ENCODE measurements at regions of chr19 and their contacts with region 1.

Region 1: GRCh38 chr19:16355293-16356043 is 30.8 kb downstream of the KLF2 start:
- DNase-seq: no peak
- H3K4me3 Mint-ChIP-seq: no peak overlapping the region
- H3K27ac Mint-ChIP-seq: peak overlapping the region; percentile 69
- H3K4me1 Mint-ChIP-seq: peaks cover 80% of the 10 kb centered on the region
- H3K27me3 Mint-ChIP-seq: no peaks in the 10 kb centered on the region

Region 2: DNA sequence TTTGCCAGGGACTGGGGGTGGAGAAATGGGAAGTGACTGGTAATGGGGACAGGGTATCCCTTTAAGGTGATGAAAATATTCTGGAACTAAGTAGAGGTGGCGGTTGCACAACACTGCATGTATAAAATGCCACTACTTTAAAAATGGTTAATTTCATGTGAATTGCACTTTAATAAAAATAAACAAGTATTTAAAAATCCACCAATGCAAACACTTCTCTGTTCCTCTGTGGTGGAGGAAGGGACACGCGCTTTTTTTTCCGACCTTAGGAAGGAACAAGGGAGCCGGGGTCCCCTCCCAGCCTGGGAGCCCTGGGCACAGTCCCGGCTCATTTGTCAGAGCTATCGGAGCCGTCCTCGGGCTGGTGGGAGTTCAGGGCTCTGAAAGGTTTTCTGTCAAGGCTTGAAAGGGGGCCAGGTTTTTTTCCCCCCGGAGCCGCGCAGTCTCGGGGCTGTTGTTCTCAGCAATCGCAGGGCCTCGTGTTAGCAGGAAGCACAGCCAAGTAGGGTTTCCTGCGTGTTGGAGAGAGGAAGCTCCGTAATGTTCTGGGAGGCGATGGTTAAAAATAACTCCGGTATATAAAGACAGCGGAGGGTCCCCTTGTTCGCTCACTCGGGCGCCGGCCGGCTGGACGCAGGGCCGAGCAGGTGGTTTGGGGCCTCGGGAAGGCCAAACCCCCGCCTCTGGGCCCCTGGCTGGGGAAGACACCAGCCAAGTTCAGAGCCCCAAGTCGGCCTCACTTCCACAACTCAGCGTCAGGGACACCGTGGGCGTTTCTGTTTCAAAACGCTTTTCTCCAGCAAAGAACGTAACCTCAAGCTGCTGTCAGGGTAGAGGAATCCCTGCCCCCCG is 72.0 kb before region 1 on chr19:
- CTCF ChIA-PET with region 1: no interaction called
- POLR2A ChIA-PET with region 1: no interaction called
- DNase-seq: peak; percentile 53
- H3K4me3 Mint-ChIP-seq: peak overlapping the region; percentile 21
- H3K27ac Mint-ChIP-seq: peak overlapping the region; percentile 40
- H3K4me1 Mint-ChIP-seq: peaks cover 32% of the 10 kb centered on the region
- H3K27me3 Mint-ChIP-seq: peaks cover 23% of the 10 kb centered on the region

Region 3: GRCh38 chr19:16338470-16339360 is 16.8 kb before region 1 on chr19:
- CTCF ChIA-PET with region 1: interaction called, 15 read pairs
- POLR2A ChIA-PET with region 1: interaction called, 3,221 read pairs
- DNase-seq: peak; percentile 83
- H3K4me3 Mint-ChIP-seq: peak overlapping the region; percentile 67
- H3K27ac Mint-ChIP-seq: peak overlapping the region; percentile 85
- H3K4me1 Mint-ChIP-seq: peaks cover 70% of the 10 kb centered on the region
- H3K27me3 Mint-ChIP-seq: peaks cover 4% of the 10 kb centered on the region

Region 4: DNA sequence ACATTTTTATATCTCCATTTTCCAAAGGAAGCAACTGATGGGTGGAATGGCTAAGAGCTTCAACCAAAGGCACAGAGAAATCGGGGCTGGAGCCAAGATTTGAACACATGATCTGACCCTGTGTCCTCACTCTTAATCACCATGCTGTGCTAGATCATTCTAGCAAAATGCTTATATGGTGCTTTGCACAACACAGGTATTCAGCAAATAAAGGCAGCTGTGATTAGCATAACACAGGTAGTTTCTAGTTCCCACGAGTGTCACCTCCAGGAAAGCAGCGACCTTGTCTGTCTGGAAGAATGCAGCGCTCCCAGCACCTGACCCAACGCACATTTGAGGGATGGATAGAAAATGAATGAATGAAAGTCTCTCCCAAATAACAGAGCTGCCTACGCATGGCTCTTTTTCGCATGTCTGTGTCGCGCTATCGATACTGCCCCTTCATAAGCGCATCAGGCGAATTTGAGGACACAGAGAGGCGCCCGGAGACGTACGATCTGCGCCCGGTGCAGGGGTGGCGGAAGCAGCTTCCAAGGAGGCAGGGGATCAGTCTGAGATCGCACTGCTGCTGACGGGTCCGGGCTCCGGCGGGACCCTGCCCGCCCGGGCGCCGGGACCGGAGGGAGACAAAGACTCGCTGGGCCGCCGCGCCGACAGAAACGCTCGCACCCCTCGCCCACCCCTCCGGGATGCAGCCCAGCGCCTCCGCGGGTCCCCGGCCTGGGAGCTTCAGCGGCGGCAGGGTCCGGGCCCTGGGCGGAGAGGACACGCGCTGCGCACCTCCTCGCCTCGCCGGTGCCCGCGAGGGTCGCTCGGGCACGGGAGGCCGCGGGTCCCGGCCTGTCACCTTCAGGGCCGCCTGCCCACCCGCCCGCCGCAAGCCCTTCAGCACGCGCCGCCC is 115.7 kb after region 1 on chr19:
- CTCF ChIA-PET with region 1: no interaction called
- POLR2A ChIA-PET with region 1: no interaction called
- DNase-seq: peak; percentile 41
- H3K4me3 Mint-ChIP-seq: peak overlapping the region; percentile 87
- H3K27ac Mint-ChIP-seq: peak overlapping the region; percentile 52
- H3K4me1 Mint-ChIP-seq: peaks cover 34% of the 10 kb centered on the region
- H3K27me3 Mint-ChIP-seq: peaks cover 5% of the 10 kb centered on the region